ENCODE measurements at regions of chr15 and their contacts with region 1.

Region 1: GRCh38 chr15:68304589-68305337 is 27.2 kb downstream of the FEM1B start:
- DNase-seq: no peak
- ATAC-seq: no peak
- H3K4me3 Mint-ChIP-seq: no peak overlapping the region
- H3K27ac Mint-ChIP-seq: no peak overlapping the region
- H3K4me1 Mint-ChIP-seq: peaks cover 21% of the 10 kb centered on the region
- H3K27me3 Mint-ChIP-seq: no peaks in the 10 kb centered on the region

Region 2: DNA sequence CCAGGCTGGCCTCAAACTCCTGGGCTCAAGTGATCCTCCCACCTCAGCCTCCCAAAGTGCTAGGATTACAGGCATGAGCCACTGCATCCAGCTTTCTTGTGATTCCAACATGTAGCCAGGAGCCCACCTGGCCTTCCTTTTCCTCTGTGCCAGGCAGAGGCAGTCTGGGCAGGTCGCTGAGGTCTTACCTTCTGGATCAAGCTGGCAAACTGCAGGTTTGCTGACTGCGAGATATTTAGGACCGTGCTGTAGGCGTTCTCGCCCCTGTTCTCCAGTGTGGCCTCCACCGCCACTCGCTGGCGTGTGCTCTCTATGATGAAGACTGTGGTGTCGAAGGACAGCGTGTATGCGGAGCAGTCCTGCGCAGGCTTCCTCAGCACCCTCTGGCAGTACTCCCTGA is 15.2 kb after region 1 on chr15:
- CTCF ChIA-PET with region 1: interaction called, 10 read pairs
- POLR2A ChIA-PET with region 1: no interaction called
- intact Hi-C with region 1: no loop called
- DNase-seq: peak; percentile 1
- ATAC-seq: no peak
- H3K4me3 Mint-ChIP-seq: no peak overlapping the region
- H3K27ac Mint-ChIP-seq: no peak overlapping the region
- H3K4me1 Mint-ChIP-seq: no peaks in the 10 kb centered on the region
- H3K27me3 Mint-ChIP-seq: no peaks in the 10 kb centered on the region

Region 3: DNA sequence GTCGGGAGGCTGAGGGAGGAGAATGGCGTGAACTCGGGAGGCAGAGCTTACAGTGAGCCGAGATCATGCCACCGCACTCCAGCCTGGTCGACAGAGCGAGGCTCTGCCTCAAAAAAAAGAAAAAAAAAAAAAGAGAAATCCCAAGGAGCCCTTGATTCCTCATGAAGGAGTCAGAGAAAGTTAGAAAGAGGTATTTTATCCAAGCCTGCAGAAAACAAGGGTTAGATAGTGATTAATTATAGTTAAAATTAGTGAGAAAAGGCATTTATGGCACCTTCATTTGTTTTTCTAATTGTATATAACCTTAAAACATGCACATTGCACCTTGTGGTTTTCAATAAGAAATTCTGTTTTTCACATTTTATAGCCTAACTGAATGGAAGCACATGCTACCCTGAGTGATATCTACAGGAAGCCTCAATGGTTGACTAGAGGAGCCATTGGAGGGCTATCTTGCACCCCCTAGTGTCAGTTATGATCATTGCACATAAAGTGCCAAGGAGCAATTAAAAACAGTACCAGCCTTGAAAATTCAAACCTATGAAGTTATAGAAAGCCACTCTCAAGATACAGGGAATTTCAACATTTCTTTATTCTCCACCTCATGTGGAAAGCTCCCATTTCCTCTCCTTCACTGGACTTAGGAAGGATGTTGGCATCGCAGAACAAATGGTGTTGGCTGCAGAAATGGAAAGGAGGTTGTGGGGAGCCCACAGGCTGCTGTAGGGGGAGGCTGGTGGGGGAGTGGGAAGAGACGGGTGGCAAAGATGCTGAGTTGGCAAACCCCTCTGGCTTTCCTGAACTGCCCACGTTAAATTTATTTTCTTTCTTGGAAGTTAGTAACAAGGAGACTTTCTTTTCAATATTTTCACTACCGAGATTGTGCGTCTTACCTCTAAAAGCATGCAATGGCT is 78.7 kb after region 1 on chr15:
- CTCF ChIA-PET with region 1: interaction called, 44 read pairs
- POLR2A ChIA-PET with region 1: interaction called, 3 read pairs
- intact Hi-C with region 1: loop called (anchors 1 kb)
- DNase-seq: peak; percentile 64
- ATAC-seq: peak; percentile 82
- H3K4me3 Mint-ChIP-seq: no peak overlapping the region
- H3K27ac Mint-ChIP-seq: no peak overlapping the region
- H3K4me1 Mint-ChIP-seq: peaks cover 14% of the 10 kb centered on the region
- H3K27me3 Mint-ChIP-seq: no peaks in the 10 kb centered on the region

Region 4: DNA sequence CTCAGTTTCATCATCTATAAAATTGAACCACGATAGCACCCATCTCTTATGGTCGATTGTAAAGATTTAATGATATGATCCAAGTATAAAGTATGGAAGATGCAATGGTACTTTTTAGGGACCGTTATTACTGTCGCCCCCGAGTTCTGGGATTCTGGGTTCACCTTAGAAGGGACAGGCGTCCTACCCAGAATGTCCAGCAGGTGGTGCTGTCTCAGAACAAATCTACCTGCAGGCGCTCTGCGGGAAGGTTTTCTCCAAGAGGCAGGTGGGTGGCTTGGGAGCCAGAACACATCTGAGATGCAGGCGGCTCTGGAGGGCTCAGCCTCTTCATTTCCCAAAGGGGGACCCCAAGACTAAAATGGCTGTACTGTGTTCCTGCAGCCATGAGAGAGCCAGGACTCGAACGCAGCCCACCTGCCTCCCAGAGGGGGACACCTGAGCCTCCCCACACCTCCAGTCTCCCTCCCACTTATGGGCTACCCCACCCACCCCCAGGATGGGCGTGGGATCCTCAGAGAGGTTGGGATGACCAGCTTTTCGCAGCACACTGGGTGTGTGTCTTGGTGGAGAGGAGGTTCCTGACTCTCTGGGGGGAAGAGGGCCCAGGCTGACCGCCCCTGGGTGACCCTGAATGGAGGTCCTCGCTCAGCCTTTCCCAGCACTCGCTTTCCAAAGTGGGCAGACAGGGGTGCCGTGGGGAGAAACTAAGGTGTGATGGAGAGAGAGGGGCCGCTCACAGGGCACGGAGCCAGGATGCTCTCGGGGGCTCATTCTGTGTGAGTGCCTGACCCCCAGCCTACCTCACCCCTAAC is 245.9 kb after region 1 on chr15:
- CTCF ChIA-PET with region 1: interaction called, 6 read pairs
- POLR2A ChIA-PET with region 1: no interaction called
- intact Hi-C with region 1: loop called in 1 of 2 experiments (anchors 5 kb)
- DNase-seq: peak; percentile 89
- ATAC-seq: no peak
- H3K4me3 Mint-ChIP-seq: no peak overlapping the region
- H3K27ac Mint-ChIP-seq: no peak overlapping the region
- H3K4me1 Mint-ChIP-seq: peaks cover 6% of the 10 kb centered on the region
- H3K27me3 Mint-ChIP-seq: peaks cover 29% of the 10 kb centered on the region

Measured in activated CD4-positive, alpha-beta T cell treated with anti-CD3 and anti-CD28 coated beads for 36 hours (primary cell).